Activated CD4-positive, alpha-beta memory T cell treated with anti-CD3 and anti-CD28 coated beads for 36 hours (primary cell): ENCODE measurements at regions of chr3 and their contacts with region 1.

Region 1: DNA sequence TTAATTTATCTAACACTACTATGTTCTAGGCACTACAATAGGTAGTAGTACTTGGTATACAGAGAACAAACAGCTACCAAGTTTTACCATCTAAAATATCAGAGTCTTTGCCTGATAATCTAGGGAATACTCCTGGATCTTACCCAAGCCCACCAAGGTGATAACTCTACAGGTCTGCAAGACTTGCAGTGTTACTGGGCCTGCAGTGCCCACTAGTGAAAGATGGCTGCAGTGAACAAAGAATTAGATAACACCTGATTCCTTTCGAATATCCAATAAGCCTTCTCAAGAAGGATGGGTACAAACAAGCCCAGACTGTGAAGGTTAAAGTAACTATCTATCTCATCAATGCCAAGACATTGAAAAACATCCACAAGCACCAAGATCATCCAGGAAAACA is 317.0 kb upstream of the DCBLD2 start:
- DNase-seq: no peak
- H3K4me3 Mint-ChIP-seq: no peak overlapping the region
- H3K27ac Mint-ChIP-seq: no peak overlapping the region
- H3K4me1 Mint-ChIP-seq: no peaks in the 10 kb centered on the region
- H3K27me3 Mint-ChIP-seq: no peaks in the 10 kb centered on the region

Region 2: GRCh38 chr3:99167071-99167470 is 51.4 kb before region 1 on chr3:
- CTCF ChIA-PET with region 1: no interaction called
- POLR2A ChIA-PET with region 1: no interaction called
- intact Hi-C with region 1: loop called (anchors 2 kb)
- DNase-seq: no peak
- H3K4me3 Mint-ChIP-seq: no peak overlapping the region
- H3K27ac Mint-ChIP-seq: no peak overlapping the region
- H3K4me1 Mint-ChIP-seq: no peaks in the 10 kb centered on the region
- H3K27me3 Mint-ChIP-seq: no peaks in the 10 kb centered on the region

Region 3: DNA sequence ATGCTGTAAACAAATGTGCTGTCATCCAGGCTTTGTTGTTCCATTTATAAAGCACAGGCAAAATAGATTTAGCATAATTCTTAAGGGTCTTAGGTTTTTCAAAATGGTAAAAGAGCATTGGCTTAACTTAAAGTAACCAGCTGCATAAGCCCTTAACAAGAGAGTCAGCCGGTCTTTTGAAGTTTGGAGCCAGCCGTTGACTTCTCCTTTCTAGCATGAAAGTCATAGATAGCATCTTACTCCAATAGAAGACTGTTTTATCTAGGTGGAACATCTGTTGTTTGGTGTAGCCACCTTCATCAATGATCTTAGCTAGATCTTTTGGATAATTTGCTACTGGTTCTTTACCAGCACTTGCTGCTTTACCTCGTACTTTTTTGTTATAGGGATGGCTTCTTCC is 19.4 kb before region 1 on chr3:
- CTCF ChIA-PET with region 1: no interaction called
- POLR2A ChIA-PET with region 1: no interaction called
- intact Hi-C with region 1: no loop called
- DNase-seq: no peak
- H3K4me3 Mint-ChIP-seq: no peak overlapping the region
- H3K27ac Mint-ChIP-seq: no peak overlapping the region
- H3K4me1 Mint-ChIP-seq: no peaks in the 10 kb centered on the region
- H3K27me3 Mint-ChIP-seq: no peaks in the 10 kb centered on the region

Region 4: GRCh38 chr3:99236576-99236975 is 18.1 kb after region 1 on chr3:
- CTCF ChIA-PET with region 1: no interaction called
- POLR2A ChIA-PET with region 1: no interaction called
- intact Hi-C with region 1: no loop called
- DNase-seq: no peak
- H3K4me3 Mint-ChIP-seq: no peak overlapping the region
- H3K27ac Mint-ChIP-seq: no peak overlapping the region
- H3K4me1 Mint-ChIP-seq: no peaks in the 10 kb centered on the region
- H3K27me3 Mint-ChIP-seq: no peaks in the 10 kb centered on the region